Heart left ventricle (tissue), 16 donors: ENCODE measurements at regions of chr17 and their contacts with region 1.

Region 1: GRCh38 chr17:57243171-57243948 is 13.0 kb upstream of the MSI2 start:
- DNase-seq: peak; percentile 38 to 73 (median 60)
- ATAC-seq: peak; percentile 58 to 85 (median 74)
- H3K4me3 ChIP-seq: no peak overlapping the region
- H3K27ac ChIP-seq: peak overlapping the region in 6 of 12 donors; percentile 16 to 67 (median 41)
- H3K4me1 ChIP-seq: peaks cover 0 to 17% (median 12%) of the 10 kb centered on the region in 12 donors
- H3K27me3 ChIP-seq: peaks cover 0 to 4% (median 0%) of the 10 kb centered on the region in 9 donors
- CTCF ChIP-seq: peak; percentile 95 to 99 (median 97)
- POLR2A ChIP-seq: no peak

Region 2: GRCh38 chr17:57440522-57441485 is 197.4 kb after region 1 on chr17:
- intact Hi-C with region 1: loop called in 5 of 10 experiments (anchors 5 to 10 kb)
- DNase-seq: peak; percentile 76 to 88 (median 78)
- ATAC-seq: peak; percentile 74 to 86 (median 84)
- H3K4me3 ChIP-seq: peak overlapping the region in 1 of 12 donors; percentile 7
- H3K27ac ChIP-seq: peak overlapping the region; percentile 11 to 87 (median 69)
- H3K4me1 ChIP-seq: peaks cover 4 to 91% (median 57%) of the 10 kb centered on the region in 12 donors
- H3K27me3 ChIP-seq: no peaks in the 10 kb centered on the region
- CTCF ChIP-seq: peak; percentile 16 to 80 (median 56)
- POLR2A ChIP-seq: no peak

Region 3: GRCh38 chr17:57662644-57663308 is 419.4 kb after region 1 on chr17:
- intact Hi-C with region 1: loop called in 2 of 10 experiments (anchors 10 kb)
- DNase-seq: peak; percentile 95 to 99 (median 97)
- ATAC-seq: peak; percentile 97 to 98 (median 98)
- H3K4me3 ChIP-seq: peak overlapping the region in 10 of 12 donors; percentile 18 to 50 (median 38)
- H3K27ac ChIP-seq: peak overlapping the region; percentile 20 to 93 (median 84)
- H3K4me1 ChIP-seq: peaks cover 2 to 47% (median 23%) of the 10 kb centered on the region in 12 donors
- H3K27me3 ChIP-seq: no peaks in the 10 kb centered on the region
- CTCF ChIP-seq: peak in 4 of 12 donors; percentile 5 to 30 (median 11)
- POLR2A ChIP-seq: peak in 1 of 2 donors; percentile 55

Region 4: DNA sequence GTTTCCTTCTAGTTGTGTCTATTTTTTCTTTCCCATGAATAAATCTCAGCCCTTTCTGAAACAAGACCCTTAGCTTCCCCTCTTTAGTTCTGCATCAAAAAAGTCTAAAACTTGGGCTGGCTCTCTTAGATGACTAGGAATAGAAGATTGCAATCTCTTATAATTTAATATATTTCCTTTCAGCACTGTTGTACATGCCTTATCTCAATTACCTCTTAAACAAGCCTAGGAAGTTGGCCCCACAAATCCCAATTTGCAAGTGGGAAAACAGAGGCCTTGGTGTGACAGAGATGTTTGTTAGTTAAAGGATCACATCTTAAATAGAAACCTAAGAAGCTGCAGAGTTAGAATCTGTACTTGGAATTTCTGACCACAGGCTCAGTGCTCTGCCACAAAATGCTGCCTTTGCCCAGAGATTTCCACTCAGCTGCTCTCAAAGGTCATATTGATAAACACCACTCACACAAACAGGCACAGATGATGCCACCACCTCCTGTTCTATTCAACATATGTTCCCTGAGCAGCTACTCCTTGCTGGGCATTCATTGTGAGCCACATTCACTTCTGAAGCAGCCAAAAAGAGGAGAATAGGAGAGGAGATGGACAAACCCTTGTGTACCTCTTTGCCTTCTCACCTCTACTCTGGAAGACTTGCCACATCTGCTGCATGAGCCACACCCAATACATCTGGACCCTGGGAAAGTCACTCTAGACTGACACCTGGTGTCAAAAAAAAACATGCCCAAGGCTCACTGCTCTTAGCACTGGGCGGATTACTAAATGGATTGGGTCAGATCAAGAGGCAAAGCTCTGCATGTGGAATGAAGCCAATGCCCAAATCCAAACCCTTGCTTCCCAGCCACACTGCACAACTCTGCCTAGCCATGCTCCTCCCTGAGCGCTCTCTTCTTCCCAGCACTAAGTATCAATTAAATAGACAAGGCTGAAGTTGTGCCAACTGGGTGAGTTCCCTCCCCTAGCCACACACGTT is 496.3 kb after region 1 on chr17:
- intact Hi-C with region 1: loop called in 3 of 10 experiments (anchors 5 to 10 kb)
- DNase-seq: no peak
- ATAC-seq: peak in 2 of 4 donors; percentile 42 to 63
- H3K4me3 ChIP-seq: no peak overlapping the region
- H3K27ac ChIP-seq: no peak overlapping the region
- H3K4me1 ChIP-seq: no peaks in the 10 kb centered on the region
- H3K27me3 ChIP-seq: peaks cover 0 to 3% (median 0%) of the 10 kb centered on the region in 9 donors
- CTCF ChIP-seq: peak in 9 of 12 donors; percentile 19 to 46 (median 31)
- POLR2A ChIP-seq: no peak